CD4-positive, alpha-beta memory T cell (primary cell): ENCODE measurements at regions of chr21 and their contacts with region 1.

Region 1: DNA sequence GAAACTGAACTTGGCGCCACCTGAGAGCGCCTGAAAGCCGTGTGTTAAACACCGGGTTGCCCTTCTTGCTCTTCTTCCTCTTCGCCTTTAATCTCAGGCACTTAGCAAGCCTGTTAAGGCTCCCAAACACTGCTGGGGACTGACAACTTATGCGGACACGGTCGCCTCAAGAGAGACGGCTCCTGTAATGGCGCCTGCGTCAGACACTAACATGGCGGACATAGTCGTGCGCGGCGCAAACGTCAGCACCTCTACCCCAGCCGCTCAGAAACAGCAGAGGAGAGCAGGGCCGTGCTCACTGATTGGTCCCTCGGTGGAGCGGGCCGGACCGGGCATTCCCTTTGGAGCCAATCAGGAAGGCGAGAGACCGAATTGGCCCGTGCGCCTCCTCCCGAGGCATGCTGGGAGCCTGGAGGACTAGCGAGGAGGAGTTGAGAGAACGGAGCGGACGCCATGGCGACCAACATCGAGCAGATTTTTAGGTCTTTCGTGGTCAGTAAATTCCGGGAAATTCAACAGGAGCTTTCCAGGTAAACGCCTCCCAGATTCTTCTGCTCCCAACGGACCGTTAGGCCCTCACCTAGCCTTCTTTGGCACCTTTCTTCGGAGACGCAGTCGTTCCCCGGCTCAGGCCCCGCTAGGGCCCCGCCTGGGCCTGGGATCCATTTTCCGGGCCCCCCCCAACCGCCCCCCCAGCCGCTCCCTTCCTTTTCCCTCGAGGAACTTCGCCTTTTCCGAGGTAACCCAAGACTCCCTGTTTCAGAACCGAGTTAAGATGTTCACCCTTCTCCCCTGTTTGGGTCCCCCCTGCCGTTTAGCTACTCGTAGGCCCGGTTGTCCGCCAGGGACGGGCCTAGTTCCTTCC is at the start of gene SON:
- DNase-seq: peak; percentile 96 to 99 (median 98)
- H3K4me3 ChIP-seq: peak within 1 kb of the TSS; percentile 87 to 96
- H3K4me3 Mint-ChIP-seq: peak within 1 kb of the TSS; percentile 96 to 100 (median 98)
- H3K27ac ChIP-seq: peak within 1 kb of the TSS; percentile 99
- H3K27ac Mint-ChIP-seq: peak within 1 kb of the TSS; percentile 98 to 100 (median 100)
- H3K4me1 ChIP-seq: peaks cover 52% of the 10 kb centered on the region
- H3K4me1 Mint-ChIP-seq: peaks cover 24 to 57% (median 36%) of the 10 kb centered on the region in 4 donors
- H3K27me3 ChIP-seq: no peaks in the 10 kb centered on the region
- H3K27me3 Mint-ChIP-seq: no peaks in the 10 kb centered on the region
- total RNA-seq, gene SON: 436 to 454 TPM

Region 2: GRCh38 chr21:32727687-32728455 is 815.0 kb before region 1 on chr21 and contains the start of gene SYNJ1:
- CTCF ChIA-PET with region 1: no interaction called
- POLR2A ChIA-PET with region 1: interaction called, 4 read pairs
- intact Hi-C with region 1: loop called (anchors 2 kb)
- DNase-seq: peak; percentile 94 to 95 (median 94)
- H3K4me3 ChIP-seq: peak within 1 kb of the TSS; percentile 62 to 92
- H3K4me3 Mint-ChIP-seq: peak within 1 kb of the TSS; percentile 97 to 100 (median 98)
- H3K27ac ChIP-seq: peak within 1 kb of the TSS; percentile 75
- H3K27ac Mint-ChIP-seq: peak within 1 kb of the TSS; percentile 90 to 98 (median 98)
- H3K4me1 ChIP-seq: peaks cover 58% of the 10 kb centered on the region
- H3K4me1 Mint-ChIP-seq: peaks cover 38 to 76% (median 52%) of the 10 kb centered on the region in 4 donors
- H3K27me3 ChIP-seq: no peaks in the 10 kb centered on the region
- H3K27me3 Mint-ChIP-seq: no peaks in the 10 kb centered on the region
- total RNA-seq, gene SYNJ1: 27.6 to 29.4 TPM

Region 3: DNA sequence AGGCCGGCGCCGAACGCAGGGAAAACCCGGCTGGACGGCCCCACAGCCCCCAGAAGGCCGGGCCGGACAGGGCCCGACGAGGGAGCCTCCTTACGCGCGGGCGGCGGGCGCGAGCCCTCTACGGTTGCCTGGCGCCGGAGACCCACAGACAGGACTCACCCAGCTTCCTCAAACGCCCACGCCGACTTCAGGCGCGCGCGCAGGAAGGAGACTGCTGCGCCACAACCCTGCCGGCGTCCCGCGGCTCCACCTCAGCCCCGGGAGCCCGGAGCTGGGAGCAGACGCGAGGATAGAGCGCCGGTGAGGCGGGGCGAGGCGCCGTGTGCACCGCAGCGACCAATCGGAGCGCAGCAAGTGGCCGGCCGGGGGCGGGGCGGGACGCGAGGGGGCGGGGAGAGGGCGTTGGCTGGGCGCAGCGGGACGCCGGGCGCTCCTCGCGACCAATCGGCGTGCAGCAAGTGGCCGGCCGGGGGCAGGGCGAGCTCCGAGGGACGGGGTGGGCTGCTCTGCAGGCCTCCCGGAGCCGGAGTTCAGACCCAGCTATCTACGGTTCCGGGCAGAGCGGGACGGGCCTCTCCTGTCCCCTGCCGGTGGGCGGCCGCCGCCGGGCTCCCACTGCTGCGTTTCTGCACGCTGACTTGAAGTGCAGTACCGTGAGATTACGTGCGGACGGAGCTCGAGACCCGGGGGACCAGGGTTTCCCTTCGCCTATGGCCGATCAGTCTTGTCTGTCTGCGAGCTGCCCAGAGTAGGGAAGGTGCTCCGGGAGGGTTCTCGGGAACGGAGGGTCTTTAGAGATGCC is 63.0 kb before region 1 on chr21 and contains the start of gene TMEM50B:
- CTCF ChIA-PET with region 1: interaction called, 3 read pairs
- POLR2A ChIA-PET with region 1: interaction called, 93 read pairs
- intact Hi-C with region 1: loop called (anchors 1 kb)
- DNase-seq: peak; percentile 91 to 95 (median 94)
- H3K4me3 ChIP-seq: peak within 1 kb of the TSS; percentile 71 to 95
- H3K4me3 Mint-ChIP-seq: peak within 1 kb of the TSS; percentile 92 to 96 (median 94)
- H3K27ac ChIP-seq: peak within 1 kb of the TSS; percentile 91
- H3K27ac Mint-ChIP-seq: peak within 1 kb of the TSS; percentile 87 to 97 (median 95)
- H3K4me1 ChIP-seq: peaks cover 14% of the 10 kb centered on the region
- H3K4me1 Mint-ChIP-seq: peaks cover 8 to 29% (median 19%) of the 10 kb centered on the region in 4 donors
- H3K27me3 ChIP-seq: no peaks in the 10 kb centered on the region
- H3K27me3 Mint-ChIP-seq: no peaks in the 10 kb centered on the region
- total RNA-seq, gene TMEM50B: 110 to 112 TPM

Region 4: DNA sequence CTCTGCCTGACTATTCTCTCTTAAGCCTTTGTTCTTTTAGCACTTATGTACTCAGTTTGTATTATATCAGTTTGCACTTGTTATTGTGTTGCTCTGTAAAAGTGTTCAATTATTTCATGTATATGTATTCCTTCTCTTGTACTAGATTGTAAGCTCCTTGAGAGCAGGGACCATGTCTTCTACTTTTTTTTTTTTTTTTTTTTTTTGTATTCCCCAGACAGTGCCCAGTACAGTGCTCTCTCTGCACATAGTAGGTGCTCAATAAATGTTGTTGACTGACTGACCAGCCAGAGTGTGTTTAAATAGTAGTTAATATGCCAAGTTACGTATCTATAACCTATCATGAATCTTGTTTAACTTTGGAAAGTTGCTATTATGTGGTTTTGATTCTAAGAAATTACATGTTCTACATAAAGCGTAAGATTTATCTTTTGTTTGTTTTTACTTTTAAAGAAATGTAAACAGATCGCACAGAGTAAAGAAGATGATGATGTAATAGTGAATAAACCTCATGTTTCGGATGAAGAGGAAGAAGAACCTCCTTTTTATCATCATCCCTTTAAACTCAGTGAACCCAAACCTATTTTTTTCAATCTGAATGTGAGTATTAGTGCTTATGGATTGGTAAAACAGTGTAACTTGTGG is 16.0 kb after region 1 on chr21:
- CTCF ChIA-PET with region 1: interaction called, 3 read pairs
- POLR2A ChIA-PET with region 1: interaction called, 48 read pairs
- intact Hi-C with region 1: loop called (anchors 2 kb)
- DNase-seq: no peak
- H3K4me3 ChIP-seq: no peak overlapping the region
- H3K4me3 Mint-ChIP-seq: peak overlapping the region in 2 of 8 donors; percentile 5 to 13
- H3K27ac ChIP-seq: no peak overlapping the region
- H3K27ac Mint-ChIP-seq: peak overlapping the region in 2 of 7 donors; percentile 55 to 75
- H3K4me1 ChIP-seq: peaks cover 53% of the 10 kb centered on the region
- H3K4me1 Mint-ChIP-seq: peaks cover 49 to 89% (median 63%) of the 10 kb centered on the region in 4 donors
- H3K27me3 ChIP-seq: no peaks in the 10 kb centered on the region
- H3K27me3 Mint-ChIP-seq: no peaks in the 10 kb centered on the region

Region 5: DNA sequence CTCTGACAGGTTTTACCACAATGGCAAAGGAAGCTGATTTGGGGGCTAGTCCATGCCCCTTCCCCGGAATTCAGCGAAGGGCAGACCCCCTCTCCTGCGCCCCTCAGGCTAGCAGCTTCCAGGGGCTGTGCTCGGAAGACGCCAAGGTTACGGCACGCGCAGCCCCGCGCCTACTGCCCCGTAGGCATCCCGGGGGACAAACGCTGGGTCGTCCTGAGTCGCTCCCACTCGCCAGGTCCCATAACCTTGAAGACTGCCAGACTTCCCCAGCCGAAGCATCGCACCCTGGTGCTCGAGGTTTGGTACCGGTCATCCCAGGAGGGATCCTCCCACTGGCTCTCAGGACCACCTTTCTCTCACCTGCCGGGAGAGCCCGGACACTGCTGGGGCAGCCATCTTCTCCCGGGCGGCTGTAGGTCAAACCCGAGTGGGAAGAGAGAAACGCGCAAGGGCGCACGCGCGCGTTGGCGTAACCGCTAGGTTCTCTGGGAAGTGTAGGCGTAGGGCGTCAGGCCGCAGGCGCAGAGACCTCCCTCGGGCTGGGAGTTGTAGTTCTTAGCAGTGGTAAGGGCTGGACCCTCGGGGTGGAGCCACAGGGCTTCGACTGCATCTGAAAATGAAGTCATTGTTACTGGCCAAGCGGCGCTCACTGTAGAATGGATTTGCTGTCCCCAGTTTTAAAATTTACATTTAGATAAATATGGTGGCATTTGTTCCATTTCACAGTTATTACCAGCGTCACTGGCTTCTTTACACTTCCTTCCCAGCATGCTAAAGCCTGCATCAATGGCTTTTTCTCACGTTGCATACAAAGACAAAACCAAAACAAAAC is 372.7 kb after region 1 on chr21 and contains the start of gene ATP5PO:
- CTCF ChIA-PET with region 1: no interaction called
- POLR2A ChIA-PET with region 1: no interaction called
- intact Hi-C with region 1: loop called (anchors 1 kb)
- DNase-seq: peak; percentile 94 to 96 (median 94)
- H3K4me3 ChIP-seq: peak within 1 kb of the TSS; percentile 90
- H3K4me3 Mint-ChIP-seq: peak within 1 kb of the TSS; percentile 97 to 99 (median 98)
- H3K27ac ChIP-seq: peak within 1 kb of the TSS; percentile 91
- H3K27ac Mint-ChIP-seq: peak within 1 kb of the TSS; percentile 92 to 99 (median 99)
- H3K4me1 ChIP-seq: peaks cover 35% of the 10 kb centered on the region
- H3K4me1 Mint-ChIP-seq: peaks cover 17 to 34% (median 28%) of the 10 kb centered on the region in 4 donors
- H3K27me3 ChIP-seq: no peaks in the 10 kb centered on the region
- H3K27me3 Mint-ChIP-seq: no peaks in the 10 kb centered on the region
- total RNA-seq, gene ATP5PO: 126 to 143 TPM